ENCODE measurements at regions of chr1 and their contacts with region 1.

Region 1: GRCh38 chr1:8858888-8859706 is 19.4 kb downstream of the ENO1 start:
- DNase-seq: peak; percentile 29
- H3K4me3 Mint-ChIP-seq: no peak overlapping the region
- H3K27ac Mint-ChIP-seq: peak overlapping the region; percentile 54
- H3K4me1 Mint-ChIP-seq: peaks cover 37% of the 10 kb centered on the region
- H3K27me3 Mint-ChIP-seq: no peaks in the 10 kb centered on the region

Region 2: GRCh38 chr1:8835941-8836643 is 23.0 kb before region 1 on chr1:
- intact Hi-C with region 1: no loop called
- DNase-seq: no peak
- H3K4me3 Mint-ChIP-seq: no peak overlapping the region
- H3K27ac Mint-ChIP-seq: no peak overlapping the region
- H3K4me1 Mint-ChIP-seq: peaks cover 1% of the 10 kb centered on the region
- H3K27me3 Mint-ChIP-seq: peaks cover 9% of the 10 kb centered on the region

Region 3: GRCh38 chr1:8873506-8874229 is 14.6 kb after region 1 on chr1:
- intact Hi-C with region 1: loop called (anchors 2 kb)
- DNase-seq: peak; percentile 56
- H3K4me3 Mint-ChIP-seq: peak overlapping the region; percentile 98
- H3K27ac Mint-ChIP-seq: peak overlapping the region; percentile 53
- H3K4me1 Mint-ChIP-seq: peaks cover 54% of the 10 kb centered on the region
- H3K27me3 Mint-ChIP-seq: no peaks in the 10 kb centered on the region

Region 4: DNA sequence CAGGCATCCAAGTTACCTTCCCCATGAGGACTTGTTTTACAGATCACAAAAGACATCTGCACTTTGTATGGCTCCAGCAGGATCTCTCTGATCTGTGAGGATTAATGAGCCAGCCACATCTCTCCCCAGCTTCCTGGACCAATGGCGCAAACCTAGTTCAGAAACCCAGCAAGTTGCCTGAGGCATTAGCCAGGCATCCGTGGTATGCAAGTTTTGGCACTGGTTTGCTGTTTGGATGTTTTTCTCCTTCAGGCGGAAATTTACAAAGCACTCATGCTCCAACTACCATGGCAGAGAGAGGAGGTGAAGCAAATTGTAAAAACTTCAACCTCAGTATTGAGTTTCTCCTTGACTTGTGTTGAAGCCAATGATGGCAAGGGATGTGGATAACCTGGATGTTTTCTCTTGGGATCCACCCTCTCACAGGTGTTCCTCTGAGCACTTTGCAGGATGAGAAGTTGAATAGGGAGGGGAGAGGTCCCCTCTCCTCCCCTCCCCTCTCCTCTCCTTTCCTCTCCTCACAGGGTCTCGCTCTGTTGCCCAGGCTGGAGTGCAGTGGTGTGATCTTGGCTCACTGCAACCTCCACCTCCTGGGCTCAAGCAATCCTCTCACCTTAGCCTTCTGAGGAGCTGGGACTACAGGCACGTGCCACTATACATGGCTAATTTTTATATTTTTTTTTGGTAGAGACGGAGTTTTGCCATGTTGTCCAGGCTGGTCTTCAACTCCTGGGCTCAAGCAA is 45.0 kb after region 1 on chr1:
- intact Hi-C with region 1: loop called (anchors 5 kb)
- DNase-seq: no peak
- H3K4me3 Mint-ChIP-seq: no peak overlapping the region
- H3K27ac Mint-ChIP-seq: no peak overlapping the region
- H3K4me1 Mint-ChIP-seq: peaks cover 41% of the 10 kb centered on the region
- H3K27me3 Mint-ChIP-seq: no peaks in the 10 kb centered on the region

Region 5: GRCh38 chr1:9018333-9018732 is 159.2 kb after region 1 on chr1:
- intact Hi-C with region 1: no loop called
- DNase-seq: no peak
- H3K4me3 Mint-ChIP-seq: no peak overlapping the region
- H3K27ac Mint-ChIP-seq: no peak overlapping the region
- H3K4me1 Mint-ChIP-seq: no peaks in the 10 kb centered on the region
- H3K27me3 Mint-ChIP-seq: peaks cover 12% of the 10 kb centered on the region